Spleen (tissue), 13 donors: ENCODE measurements at regions of chr20 and their contacts with region 1.

Region 1: GRCh38 chr20:44866703-44867335 is 18.7 kb upstream of the YWHAB start:
- DNase-seq: no peak
- H3K4me3 ChIP-seq: peak overlapping the region in 1 of 8 donors; percentile 55
- H3K27ac ChIP-seq: no peak overlapping the region
- H3K4me1 ChIP-seq: peaks cover 0 to 16% (median 10%) of the 10 kb centered on the region in 6 donors
- H3K27me3 ChIP-seq: peaks cover 0 to 16% (median 0%) of the 10 kb centered on the region in 7 donors
- CTCF ChIP-seq: no peak
- POLR2A ChIP-seq: no peak

Region 2: GRCh38 chr20:44747166-44748004 is 119.4 kb before region 1 on chr20:
- intact Hi-C with region 1: loop called (anchors 5 kb)
- DNase-seq: no peak
- H3K4me3 ChIP-seq: no peak overlapping the region
- H3K27ac ChIP-seq: no peak overlapping the region
- H3K4me1 ChIP-seq: peaks cover 3 to 35% (median 20%) of the 10 kb centered on the region in 6 donors
- H3K27me3 ChIP-seq: peaks cover 0 to 73% (median 34%) of the 10 kb centered on the region in 7 donors
- CTCF ChIP-seq: peak in 10 of 11 experiments; percentile 7 to 73 (median 54)
- POLR2A ChIP-seq: no peak

Region 3: DNA sequence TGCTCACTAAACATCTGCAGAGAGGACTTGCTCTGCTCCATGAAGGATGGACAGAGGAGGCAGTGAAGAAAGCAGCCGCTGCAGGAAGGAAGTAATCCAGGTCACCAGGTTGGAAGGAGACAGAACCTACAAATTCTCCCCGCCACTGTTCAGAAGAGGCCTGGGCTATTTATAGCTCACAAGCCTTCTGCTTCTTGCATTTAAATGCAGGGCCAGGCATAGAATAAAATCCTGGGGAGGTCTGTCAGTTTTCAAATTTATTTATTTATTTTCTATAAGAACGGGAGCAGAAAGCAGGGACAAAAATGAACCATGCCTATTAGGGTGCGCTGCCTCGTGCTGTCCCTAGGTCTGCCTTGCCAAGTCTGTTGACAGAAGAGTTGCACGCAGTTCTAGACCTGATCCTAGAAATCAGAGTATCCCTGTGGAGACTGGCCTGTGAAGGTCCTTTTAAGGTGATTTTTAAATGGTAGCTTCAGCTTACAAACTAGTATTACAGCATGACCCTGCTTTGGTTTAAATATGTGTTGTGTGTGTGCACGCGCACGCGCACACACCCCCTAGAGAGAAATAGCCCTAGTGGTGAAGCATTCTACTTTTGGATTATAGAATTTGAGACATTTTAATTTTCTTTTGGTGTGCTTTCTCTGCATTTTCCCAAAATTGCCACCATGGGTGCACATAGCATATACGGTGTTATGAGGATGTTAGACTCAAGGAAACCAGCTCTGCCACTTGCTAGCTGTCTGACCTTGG is 76.0 kb before region 1 on chr20:
- intact Hi-C with region 1: no loop called
- DNase-seq: no peak
- H3K4me3 ChIP-seq: no peak overlapping the region
- H3K27ac ChIP-seq: no peak overlapping the region
- H3K4me1 ChIP-seq: no peaks in the 10 kb centered on the region
- H3K27me3 ChIP-seq: peaks cover 0 to 63% (median 0%) of the 10 kb centered on the region in 7 donors
- CTCF ChIP-seq: no peak
- POLR2A ChIP-seq: no peak

Region 4: DNA sequence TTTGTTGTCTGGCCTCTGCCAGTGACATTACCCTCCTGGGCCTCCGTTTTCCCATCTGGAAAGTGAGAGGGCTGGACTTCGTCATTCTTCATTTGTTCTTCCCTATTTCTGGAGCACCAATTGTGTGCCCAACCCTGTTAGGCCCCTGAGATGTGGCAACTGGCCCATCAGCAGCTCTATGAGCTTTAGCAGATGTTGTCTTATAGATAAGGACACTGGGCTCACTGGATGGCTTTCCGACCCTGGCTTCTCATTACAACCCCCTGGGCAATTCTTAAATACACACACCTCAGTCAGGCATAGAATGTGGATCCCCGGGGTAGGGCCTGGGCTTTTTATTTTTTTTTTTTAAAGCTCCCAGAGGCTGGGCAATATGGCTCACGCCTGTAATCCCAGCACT is 57.8 kb after region 1 on chr20:
- intact Hi-C with region 1: no loop called
- DNase-seq: no peak
- H3K4me3 ChIP-seq: no peak overlapping the region
- H3K27ac ChIP-seq: no peak overlapping the region
- H3K4me1 ChIP-seq: no peaks in the 10 kb centered on the region
- H3K27me3 ChIP-seq: no peaks in the 10 kb centered on the region
- CTCF ChIP-seq: no peak
- POLR2A ChIP-seq: no peak